ENCODE measurements at regions of chr5 and their contacts with region 1.

Region 1: GRCh38 chr5:60540856-60541805 is 158.8 kb downstream of the DEPDC1B start:
- DNase-seq: peak in 1 of 2 donors; percentile 73
- ATAC-seq: peak; percentile 67
- H3K4me3 ChIP-seq: no peak overlapping the region
- H3K27ac ChIP-seq: peak overlapping the region; percentile 72 to 91
- H3K4me1 ChIP-seq: peaks cover 4 to 5% of the 10 kb centered on the region in 2 donors
- H3K27me3 ChIP-seq: no peaks in the 10 kb centered on the region

Region 2: DNA sequence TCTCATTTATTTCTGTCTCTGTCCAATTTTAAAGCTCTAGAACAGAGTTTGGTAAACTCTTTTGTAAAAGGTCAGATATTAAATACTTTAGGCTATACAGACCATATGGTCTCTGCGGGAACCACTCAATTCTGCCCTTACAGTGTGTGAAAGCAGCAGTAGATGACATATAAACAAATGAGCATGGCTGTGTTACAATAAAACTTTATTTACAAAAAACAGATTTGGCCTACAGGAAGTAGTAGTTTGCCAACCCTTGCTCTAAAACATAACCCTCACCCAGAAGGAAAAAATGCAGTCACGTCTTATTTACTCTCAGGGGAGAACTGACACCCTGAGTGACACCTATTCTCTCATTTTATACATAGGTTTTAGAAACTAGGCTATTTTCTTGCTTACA is 61.6 kb before region 1 on chr5:
- intact Hi-C with region 1: loop called in 1 of 2 experiments (anchors 5 kb)
- DNase-seq: no peak
- ATAC-seq: no peak
- H3K4me3 ChIP-seq: no peak overlapping the region
- H3K27ac ChIP-seq: no peak overlapping the region
- H3K4me1 ChIP-seq: peaks cover 6 to 7% of the 10 kb centered on the region in 2 donors
- H3K27me3 ChIP-seq: no peaks in the 10 kb centered on the region

Region 3: GRCh38 chr5:60487885-60488442 is 53.2 kb before region 1 on chr5:
- intact Hi-C with region 1: loop called in 1 of 2 experiments (anchors 5 kb)
- DNase-seq: no peak
- ATAC-seq: peak; percentile 32
- H3K4me3 ChIP-seq: peak overlapping the region; percentile 81 to 86
- H3K27ac ChIP-seq: peak overlapping the region; percentile 92 to 94
- H3K4me1 ChIP-seq: peaks cover 2 to 5% of the 10 kb centered on the region in 2 donors
- H3K27me3 ChIP-seq: no peaks in the 10 kb centered on the region

Region 4: DNA sequence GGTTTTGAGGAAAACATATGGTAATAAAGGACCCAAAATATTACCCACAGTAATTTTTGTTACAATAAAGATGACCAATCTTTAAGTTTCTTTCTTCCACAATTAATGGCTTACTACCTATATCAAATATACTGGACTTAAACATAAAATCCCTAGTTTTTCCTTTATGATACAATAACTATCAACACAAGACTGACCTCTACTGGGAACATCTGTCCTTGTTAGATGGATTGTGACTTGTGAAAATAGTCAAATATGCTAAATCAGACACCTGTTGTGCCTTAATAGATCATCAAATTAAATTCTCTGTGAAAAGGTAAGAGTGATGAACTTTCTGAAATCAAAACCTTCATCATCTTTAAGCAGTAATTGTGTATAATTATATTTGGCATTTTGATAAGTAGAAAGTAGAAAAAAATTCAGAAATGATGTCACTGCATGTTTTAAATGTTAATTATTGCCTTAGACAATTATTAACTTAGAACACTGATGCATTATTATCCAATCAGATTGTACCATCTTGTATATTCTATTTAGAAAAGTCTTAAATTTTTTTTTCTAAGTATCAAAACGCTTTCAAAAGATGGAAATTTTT is 45.3 kb after region 1 on chr5:
- intact Hi-C with region 1: loop called in 1 of 2 experiments (anchors 5 kb)
- DNase-seq: no peak
- ATAC-seq: no peak
- H3K4me3 ChIP-seq: no peak overlapping the region
- H3K27ac ChIP-seq: no peak overlapping the region
- H3K4me1 ChIP-seq: no peaks in the 10 kb centered on the region
- H3K27me3 ChIP-seq: no peaks in the 10 kb centered on the region

Region 5: GRCh38 chr5:60597572-60598320 is 56.6 kb after region 1 on chr5:
- intact Hi-C with region 1: loop called in 1 of 2 experiments (anchors 5 kb)
- DNase-seq: no peak
- ATAC-seq: no peak
- H3K4me3 ChIP-seq: peak overlapping the region in 1 of 2 donors; percentile 18
- H3K27ac ChIP-seq: no peak overlapping the region
- H3K4me1 ChIP-seq: no peaks in the 10 kb centered on the region
- H3K27me3 ChIP-seq: no peaks in the 10 kb centered on the region

Measured in aorta (tissue), 5 donors.